ENCODE measurements at regions of chr3 and their contacts with region 1.

Region 1: GRCh38 chr3:27467545-27467944 is 16.6 kb downstream of the SLC4A7 start:
- DNase-seq: peak; percentile 70
- H3K4me3 ChIP-seq: no peak overlapping the region
- H3K27ac ChIP-seq: no peak overlapping the region
- H3K4me1 ChIP-seq: peaks cover 8% of the 10 kb centered on the region
- H3K27me3 ChIP-seq: no peaks in the 10 kb centered on the region
- CTCF ChIP-seq: peak; percentile 36 to 40
- POLR2A ChIP-seq: no peak

Region 2: GRCh38 chr3:27312044-27312668 is 155.4 kb before region 1 on chr3:
- CTCF ChIA-PET with region 1: interaction called, 8 read pairs
- POLR2A ChIA-PET with region 1: no interaction called
- dilution Hi-C with region 1: no loop called
- intact Hi-C with region 1: loop called (anchors 1 kb)
- DNase-seq: peak; percentile 79
- H3K4me3 ChIP-seq: no peak overlapping the region
- H3K27ac ChIP-seq: no peak overlapping the region
- H3K4me1 ChIP-seq: peaks cover 9% of the 10 kb centered on the region
- H3K27me3 ChIP-seq: no peaks in the 10 kb centered on the region
- CTCF ChIP-seq: peak; percentile 57 to 68
- POLR2A ChIP-seq: no peak

Region 3: DNA sequence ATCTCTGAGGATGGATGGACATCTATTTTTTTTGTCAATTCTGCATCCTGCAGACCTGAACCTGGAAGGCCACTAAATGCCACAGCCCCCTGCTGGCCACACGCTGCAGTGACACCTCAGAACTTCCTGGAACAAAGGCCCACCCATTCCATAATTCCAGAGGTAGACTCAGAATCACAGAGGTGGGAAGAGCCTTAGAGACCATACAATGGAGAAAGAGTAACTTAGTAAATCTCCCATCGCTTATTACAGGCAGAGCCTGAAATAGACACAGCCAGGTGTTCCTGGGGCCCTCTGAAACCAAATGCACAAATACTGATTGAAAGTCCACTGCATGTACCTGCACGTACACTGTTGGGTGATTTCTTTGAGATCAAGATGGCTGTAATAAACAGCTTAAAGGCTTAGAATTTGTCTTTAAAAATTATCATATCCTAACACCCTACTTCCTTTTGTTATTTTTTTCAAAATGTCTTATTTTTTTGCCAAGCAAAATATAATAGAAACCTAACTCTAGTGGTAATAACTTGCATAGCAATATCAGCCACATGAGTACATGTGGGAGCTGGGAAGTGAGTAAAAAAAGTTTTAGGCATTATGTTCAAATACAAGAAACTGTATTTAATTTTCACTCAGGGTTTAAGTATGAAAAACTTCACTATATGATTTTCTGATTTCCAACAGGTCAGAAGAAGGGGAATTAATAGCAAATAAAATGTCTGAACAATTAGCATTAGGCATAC is 191.9 kb after region 1 on chr3:
- CTCF ChIA-PET with region 1: interaction called, 3 read pairs
- POLR2A ChIA-PET with region 1: no interaction called
- dilution Hi-C with region 1: no loop called
- intact Hi-C with region 1: loop called (anchors 5 kb)
- DNase-seq: peak; percentile 55
- H3K4me3 ChIP-seq: no peak overlapping the region
- H3K27ac ChIP-seq: no peak overlapping the region
- H3K4me1 ChIP-seq: peaks cover 13% of the 10 kb centered on the region
- H3K27me3 ChIP-seq: no peaks in the 10 kb centered on the region
- CTCF ChIP-seq: peak; percentile 74 to 91
- POLR2A ChIP-seq: no peak